Sigmoid colon (tissue), 7 donors: ENCODE measurements at regions of chr15 and their contacts with region 1.

Region 1: GRCh38 chr15:80776420-80777045 is 2.6 kb upstream of the CEMIP start:
- DNase-seq: peak; percentile 82
- H3K4me3 ChIP-seq: no peak overlapping the region
- H3K27ac ChIP-seq: no peak overlapping the region
- H3K4me1 ChIP-seq: peaks cover 0 to 30% (median 24%) of the 10 kb centered on the region in 4 donors
- H3K27me3 ChIP-seq: peaks cover 0 to 25% (median 4%) of the 10 kb centered on the region in 3 donors
- CTCF ChIP-seq: peak; percentile 65 to 83 (median 82)
- EP300 ChIP-seq: no peak
- POLR2A ChIP-seq: no peak

Region 2: DNA sequence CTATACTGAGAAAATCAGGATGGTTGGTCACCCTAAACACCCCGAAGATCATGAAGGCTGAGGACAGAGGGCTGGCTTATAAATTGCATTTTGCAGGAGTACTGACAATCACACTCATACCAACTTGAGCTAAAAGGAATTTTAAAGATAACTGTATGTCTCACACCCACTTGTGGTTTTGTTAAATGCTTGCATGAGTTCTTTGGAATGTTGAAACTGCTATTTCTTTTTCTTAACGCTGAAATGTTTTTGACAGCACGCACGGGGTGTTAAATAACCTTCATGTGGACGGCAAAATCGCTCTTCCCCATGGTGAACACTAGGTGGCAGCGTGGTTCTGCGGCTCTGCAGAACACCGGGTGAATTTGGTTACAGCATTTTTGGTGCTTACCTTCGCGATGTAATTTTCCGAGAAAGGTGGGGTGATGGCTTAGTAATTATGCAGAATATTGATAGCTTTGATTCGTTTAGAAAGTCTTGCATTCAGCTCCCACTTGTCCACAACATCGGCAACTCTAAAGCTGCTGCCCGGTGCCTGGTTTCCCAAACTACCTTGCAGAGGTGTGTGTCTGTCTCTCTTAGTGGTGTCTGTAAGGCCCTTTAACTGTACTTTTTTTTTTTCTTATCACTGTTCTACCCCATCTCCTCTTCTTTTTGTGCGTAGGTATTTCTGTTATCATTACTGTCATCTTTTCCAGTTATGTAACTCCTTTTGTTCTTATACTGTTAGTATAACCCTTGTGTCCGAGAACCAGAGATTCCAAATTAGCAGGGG is 320.7 kb before region 1 on chr15:
- intact Hi-C with region 1: loop called (anchors 2 kb)
- DNase-seq: peak; percentile 74
- H3K4me3 ChIP-seq: no peak overlapping the region
- H3K27ac ChIP-seq: no peak overlapping the region
- H3K4me1 ChIP-seq: peaks cover 0 to 18% (median 9%) of the 10 kb centered on the region in 4 donors
- H3K27me3 ChIP-seq: no peaks in the 10 kb centered on the region
- CTCF ChIP-seq: peak; percentile 68 to 89 (median 88)
- EP300 ChIP-seq: no peak
- POLR2A ChIP-seq: no peak

Region 3: GRCh38 chr15:80599359-80599758 is 177.2 kb before region 1 on chr15:
- intact Hi-C with region 1: no loop called
- DNase-seq: no peak
- H3K4me3 ChIP-seq: no peak overlapping the region
- H3K27ac ChIP-seq: no peak overlapping the region
- H3K4me1 ChIP-seq: no peaks in the 10 kb centered on the region
- H3K27me3 ChIP-seq: no peaks in the 10 kb centered on the region
- CTCF ChIP-seq: no peak
- EP300 ChIP-seq: no peak
- POLR2A ChIP-seq: no peak

Region 4: DNA sequence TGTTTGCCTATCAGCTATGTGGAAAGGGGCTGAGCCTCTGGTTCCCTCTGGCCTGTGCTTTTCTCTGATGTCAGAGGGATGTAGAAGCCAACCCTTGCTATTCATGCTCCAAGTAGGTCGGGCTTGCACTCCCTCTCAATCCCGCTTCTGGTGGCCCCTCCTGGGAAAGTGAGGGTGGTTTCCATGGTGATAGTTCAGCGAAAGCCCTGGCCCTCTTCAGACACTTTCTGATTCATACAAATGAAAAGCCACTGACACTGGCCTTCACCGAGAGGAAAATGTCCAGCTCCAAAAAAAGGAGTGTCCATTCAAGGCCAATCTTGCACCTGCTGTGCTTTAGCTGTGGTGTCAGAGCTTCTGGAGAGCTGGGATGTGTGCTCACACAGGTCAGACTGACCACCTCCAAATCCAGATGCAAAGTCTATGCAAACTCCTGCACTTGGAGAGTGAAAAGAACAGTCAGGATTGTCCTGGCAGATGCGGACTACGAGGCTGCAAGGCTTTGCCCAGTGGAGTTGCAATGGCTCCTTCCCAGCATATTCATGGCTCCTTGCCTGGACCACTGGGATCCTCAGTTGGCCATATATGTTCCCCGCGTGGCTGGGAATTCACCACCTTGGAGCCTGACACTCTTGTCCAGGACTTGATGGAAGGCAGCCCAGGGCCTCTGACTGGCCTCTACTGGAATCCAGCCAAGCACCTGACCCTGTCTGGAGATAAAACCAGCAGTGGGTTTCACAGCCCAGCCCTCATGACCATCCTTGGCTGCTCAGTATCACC is 99.2 kb after region 1 on chr15:
- intact Hi-C with region 1: no loop called
- DNase-seq: no peak
- H3K4me3 ChIP-seq: no peak overlapping the region
- H3K27ac ChIP-seq: no peak overlapping the region
- H3K4me1 ChIP-seq: peaks cover 0 to 23% (median 9%) of the 10 kb centered on the region in 4 donors
- H3K27me3 ChIP-seq: no peaks in the 10 kb centered on the region
- CTCF ChIP-seq: no peak
- EP300 ChIP-seq: no peak
- POLR2A ChIP-seq: no peak

Region 5: DNA sequence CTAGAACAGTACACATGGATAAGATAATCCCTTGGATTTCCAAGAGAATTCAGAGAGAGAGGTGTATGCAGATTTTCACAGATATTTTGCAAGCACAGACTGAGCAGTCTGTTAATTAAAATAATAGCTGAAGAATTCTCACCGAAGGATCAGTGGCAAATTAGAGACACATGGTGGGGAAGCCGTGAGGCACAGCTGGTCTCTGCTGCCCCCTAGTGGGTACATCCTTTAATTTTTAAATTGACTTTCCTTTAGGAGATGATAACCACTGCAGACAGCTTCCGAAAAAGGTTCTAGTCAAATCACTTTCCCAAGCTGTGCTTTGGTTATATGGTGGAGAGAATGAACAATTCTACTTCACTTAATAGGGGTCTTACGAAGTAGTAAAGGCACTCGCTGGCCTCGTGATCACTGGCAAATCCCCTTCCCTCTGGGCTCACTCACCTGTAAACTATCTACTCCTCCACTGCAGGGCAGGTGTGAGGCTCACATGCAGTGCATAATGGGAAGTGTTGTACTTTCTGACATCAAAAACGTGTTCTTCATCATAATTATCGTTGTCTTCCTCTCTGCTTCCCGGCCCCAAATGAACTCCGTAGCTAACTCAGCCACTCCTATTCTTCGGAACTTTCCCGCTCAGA is 193.6 kb after region 1 on chr15:
- intact Hi-C with region 1: loop called (anchors 1 kb)
- DNase-seq: no peak
- H3K4me3 ChIP-seq: no peak overlapping the region
- H3K27ac ChIP-seq: no peak overlapping the region
- H3K4me1 ChIP-seq: peaks cover 0 to 24% (median 16%) of the 10 kb centered on the region in 4 donors
- H3K27me3 ChIP-seq: no peaks in the 10 kb centered on the region
- CTCF ChIP-seq: peak; percentile 53 to 88 (median 76)
- EP300 ChIP-seq: no peak
- POLR2A ChIP-seq: no peak